GM23248 (cell line): ENCODE measurements at regions of chr7 and their contacts with region 1.

Region 1: GRCh38 chr7:98841179-98841997 is 28.4 kb downstream of the TMEM130 start:
- DNase-seq: peak; percentile 83
- H3K4me3 ChIP-seq: no peak overlapping the region
- H3K27ac ChIP-seq: peak overlapping the region; percentile 46
- H3K4me1 ChIP-seq: 0 out of 2 replicates have a peak, but pooled peaks cover 6% of the 10 kb centered on the region
- H3K27me3 ChIP-seq: peaks cover 10% of the 10 kb centered on the region; the same call in 1 of the 2 replicates

Region 2: DNA sequence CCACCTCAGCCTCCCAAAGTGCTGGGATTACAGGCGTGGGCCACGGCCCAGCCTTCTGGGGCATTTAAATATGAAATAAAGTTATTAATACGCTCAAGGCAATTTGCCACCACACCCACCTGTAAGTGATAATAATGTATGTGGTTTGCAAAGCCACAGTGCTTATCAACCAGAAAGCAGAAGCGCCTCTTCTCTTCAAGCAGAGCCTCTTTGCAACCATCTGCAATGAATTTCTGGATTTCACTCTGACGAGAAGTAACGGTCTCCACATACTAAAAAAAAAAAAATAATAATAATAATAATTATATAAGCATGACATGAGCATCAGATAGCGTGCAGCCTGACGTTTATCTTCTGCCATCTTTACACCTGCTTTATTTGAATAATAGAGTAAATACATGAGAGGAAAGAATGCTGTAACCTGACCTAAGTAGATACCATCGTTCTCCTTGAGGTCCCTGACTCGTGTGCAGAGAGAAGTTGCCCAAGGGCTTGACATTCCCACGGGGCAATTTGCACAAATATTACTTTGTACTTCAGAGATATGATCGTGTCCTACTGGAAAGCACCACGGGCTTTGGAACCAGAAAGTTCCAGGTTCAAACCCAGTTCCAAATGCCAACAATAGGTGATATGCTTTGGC is 525.9 kb before region 1 on chr7:
- in situ Hi-C with region 1: loop called (anchors 25 kb)
- DNase-seq: no peak
- H3K4me3 ChIP-seq: no peak overlapping the region
- H3K27ac ChIP-seq: no peak overlapping the region
- H3K4me1 ChIP-seq: no peaks in the 10 kb centered on the region
- H3K27me3 ChIP-seq: no peaks in the 10 kb centered on the region

Region 3: GRCh38 chr7:98429799-98430198 is 411.6 kb before region 1 on chr7:
- in situ Hi-C with region 1: loop called (anchors 5 kb)
- DNase-seq: no peak
- H3K4me3 ChIP-seq: no peak overlapping the region
- H3K27ac ChIP-seq: no peak overlapping the region
- H3K4me1 ChIP-seq: no peaks in the 10 kb centered on the region
- H3K27me3 ChIP-seq: no peaks in the 10 kb centered on the region